ENCODE measurements at regions of chr1 and their contacts with region 1.

Region 1: DNA sequence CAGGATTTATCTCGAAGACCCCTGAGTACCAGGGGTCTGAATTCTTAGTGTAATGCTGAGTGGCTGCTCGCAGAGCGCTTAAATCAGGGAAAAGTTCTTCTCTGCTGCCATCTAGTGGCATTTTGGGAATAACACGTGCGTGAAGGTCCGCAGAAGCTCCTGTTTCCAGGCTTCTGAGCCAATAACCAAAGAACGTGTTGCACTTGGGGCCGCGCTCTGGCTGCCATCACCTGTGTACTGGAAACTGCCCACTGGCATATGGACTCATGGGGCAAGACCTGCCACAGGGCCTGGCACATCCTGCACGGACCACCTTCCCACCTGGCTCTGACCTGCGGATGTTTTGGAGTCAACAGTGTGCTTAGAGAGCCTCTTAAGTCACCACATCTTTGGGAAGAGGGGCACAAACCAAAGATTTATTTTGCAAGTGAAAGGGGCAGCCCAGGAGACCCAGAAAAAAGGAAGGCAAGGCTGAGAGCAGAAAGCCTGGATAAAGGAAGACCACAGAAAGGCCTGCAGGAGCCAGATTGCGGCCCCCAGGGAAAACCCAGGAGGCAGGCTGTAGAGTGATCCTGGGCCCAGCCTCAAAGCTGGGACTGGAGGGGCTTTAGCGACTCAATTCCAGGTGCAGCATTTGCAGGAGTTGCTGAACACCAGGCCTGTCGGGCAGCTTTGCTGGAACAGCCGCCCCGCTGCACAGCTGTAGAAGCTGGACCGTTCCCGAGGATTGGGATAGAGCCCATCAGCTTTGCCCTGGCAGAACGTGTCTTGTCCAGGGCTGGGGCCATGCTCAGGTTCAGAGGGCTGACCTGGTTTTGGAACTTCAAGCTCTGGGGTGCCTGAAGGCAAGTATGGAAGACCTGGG is 13.0 kb downstream of the CHIT1 start:
- DNase-seq: no peak
- H3K4me3 ChIP-seq: no peak overlapping the region
- H3K27me3 ChIP-seq: peaks cover 8% of the 10 kb centered on the region; the same call in 1 of the 2 replicates
- CTCF ChIP-seq: peak; percentile 64

Region 2: DNA sequence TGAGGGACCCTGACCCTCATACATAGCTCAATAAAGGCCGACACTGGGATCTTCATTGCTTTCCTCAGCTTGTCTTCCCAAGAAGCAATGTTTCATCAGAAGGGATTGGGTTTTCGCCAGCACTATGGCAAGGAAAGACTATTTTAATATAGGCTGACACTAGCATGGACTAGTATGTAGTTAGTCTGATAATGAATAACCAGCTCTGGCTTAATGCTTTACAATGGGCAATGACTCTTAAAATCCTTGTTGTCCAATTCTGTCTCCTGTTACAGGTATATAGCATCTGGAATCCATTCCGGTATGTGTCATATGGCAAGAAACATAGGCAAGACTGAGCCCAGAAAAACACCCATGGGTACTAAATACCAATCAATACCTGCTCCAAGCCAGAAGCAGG is 491.0 kb before region 1 on chr1:
- CTCF ChIA-PET with region 1: no interaction called
- POLR2A ChIA-PET with region 1: no interaction called
- DNase-seq: no peak
- H3K4me3 ChIP-seq: no peak overlapping the region
- H3K27me3 ChIP-seq: no peaks in the 10 kb centered on the region
- CTCF ChIP-seq: no peak

Region 3: DNA sequence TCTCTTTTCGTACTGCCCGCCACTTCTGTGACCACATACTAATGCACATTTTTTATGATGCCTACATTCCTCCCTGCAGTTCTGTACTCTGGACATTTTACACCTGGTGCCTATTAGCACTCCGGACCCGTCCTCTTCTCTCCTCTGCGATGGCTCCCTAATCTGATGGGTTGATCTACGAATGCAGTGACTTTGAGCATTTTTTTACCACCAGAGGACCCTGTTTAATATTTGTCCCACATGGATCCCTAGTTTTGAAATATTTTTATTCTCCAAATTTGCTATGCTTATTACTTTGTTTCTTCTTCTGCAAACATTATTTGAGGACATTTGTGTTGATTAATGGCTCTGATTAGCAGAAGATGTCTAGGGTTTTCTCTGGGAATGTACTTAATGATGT is 185.0 kb before region 1 on chr1:
- CTCF ChIA-PET with region 1: interaction called, 34 read pairs
- POLR2A ChIA-PET with region 1: no interaction called
- DNase-seq: no peak
- H3K4me3 ChIP-seq: no peak overlapping the region
- H3K27me3 ChIP-seq: peaks cover 1% of the 10 kb centered on the region
- CTCF ChIP-seq: peak; percentile 51

Region 4: DNA sequence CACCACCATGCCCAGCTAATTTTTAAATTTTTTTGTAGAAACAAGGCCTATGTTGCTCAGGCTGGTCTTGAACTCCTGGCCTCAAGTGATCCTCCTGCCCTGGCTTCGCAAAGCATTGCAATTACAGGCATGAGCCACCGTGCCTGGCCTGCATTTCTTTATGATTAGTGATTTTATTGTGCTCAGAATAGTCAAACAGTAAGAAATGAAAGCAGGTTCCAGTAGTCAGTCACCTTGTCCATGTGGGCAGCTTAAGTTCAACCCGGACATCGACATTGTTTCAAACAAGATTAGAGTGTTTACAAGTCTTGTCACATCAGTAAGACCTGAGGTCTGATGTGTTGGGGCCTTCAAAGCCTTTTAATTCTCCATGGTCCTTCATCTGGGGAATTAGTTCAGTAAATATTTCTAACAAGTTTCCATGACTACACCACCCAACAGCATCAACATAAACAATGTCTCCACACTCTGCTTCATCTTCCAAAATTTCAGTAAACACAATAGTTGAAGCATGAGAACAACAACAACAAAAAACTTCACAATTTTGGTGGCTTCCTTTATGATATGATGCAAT is 104.1 kb before region 1 on chr1:
- CTCF ChIA-PET with region 1: interaction called, 282 read pairs
- POLR2A ChIA-PET with region 1: no interaction called
- DNase-seq: no peak
- H3K4me3 ChIP-seq: no peak overlapping the region
- H3K27me3 ChIP-seq: peaks cover 32% of the 10 kb centered on the region
- CTCF ChIP-seq: no peak

Region 5: DNA sequence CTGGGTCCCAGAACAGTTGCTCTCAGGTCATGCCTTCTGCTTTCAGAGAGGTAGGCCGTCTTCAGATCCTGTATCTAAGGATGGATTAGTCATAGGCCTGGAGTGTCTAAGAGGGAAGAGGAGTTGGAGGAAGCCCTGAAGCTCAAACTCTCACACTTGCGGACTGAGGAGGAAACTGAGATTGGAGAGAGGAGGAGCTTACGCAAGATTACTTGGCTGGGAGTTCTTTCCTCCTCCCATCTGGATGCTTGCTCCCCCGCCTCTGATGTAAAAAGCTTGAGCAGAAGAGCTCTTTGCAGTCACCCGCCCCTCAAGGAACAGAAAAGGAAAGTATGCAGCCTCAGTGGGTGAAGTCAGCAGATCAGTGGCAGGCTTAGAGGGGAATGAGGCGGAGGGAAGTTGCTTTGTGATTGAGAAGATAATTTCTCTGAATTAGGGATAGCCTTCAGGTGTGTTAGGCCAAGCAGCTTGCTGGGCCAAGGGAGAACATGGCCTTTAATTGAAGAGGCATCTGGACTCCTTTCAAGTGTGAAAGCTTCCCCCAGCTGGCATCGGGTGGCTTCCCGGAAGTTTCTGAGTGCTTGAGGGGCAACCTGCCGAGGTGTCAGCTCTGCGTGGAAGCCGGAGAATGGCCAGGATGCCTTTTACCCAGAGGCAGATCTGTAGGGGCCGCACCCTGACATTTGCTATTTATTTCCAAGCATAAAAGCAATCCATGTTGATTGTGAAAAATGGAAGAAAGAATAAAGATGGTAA is 82.4 kb before region 1 on chr1:
- CTCF ChIA-PET with region 1: interaction called, 67 read pairs
- POLR2A ChIA-PET with region 1: no interaction called
- DNase-seq: no peak
- H3K4me3 ChIP-seq: no peak overlapping the region
- H3K27me3 ChIP-seq: no peaks in the 10 kb centered on the region
- CTCF ChIP-seq: no peak

Region 6: DNA sequence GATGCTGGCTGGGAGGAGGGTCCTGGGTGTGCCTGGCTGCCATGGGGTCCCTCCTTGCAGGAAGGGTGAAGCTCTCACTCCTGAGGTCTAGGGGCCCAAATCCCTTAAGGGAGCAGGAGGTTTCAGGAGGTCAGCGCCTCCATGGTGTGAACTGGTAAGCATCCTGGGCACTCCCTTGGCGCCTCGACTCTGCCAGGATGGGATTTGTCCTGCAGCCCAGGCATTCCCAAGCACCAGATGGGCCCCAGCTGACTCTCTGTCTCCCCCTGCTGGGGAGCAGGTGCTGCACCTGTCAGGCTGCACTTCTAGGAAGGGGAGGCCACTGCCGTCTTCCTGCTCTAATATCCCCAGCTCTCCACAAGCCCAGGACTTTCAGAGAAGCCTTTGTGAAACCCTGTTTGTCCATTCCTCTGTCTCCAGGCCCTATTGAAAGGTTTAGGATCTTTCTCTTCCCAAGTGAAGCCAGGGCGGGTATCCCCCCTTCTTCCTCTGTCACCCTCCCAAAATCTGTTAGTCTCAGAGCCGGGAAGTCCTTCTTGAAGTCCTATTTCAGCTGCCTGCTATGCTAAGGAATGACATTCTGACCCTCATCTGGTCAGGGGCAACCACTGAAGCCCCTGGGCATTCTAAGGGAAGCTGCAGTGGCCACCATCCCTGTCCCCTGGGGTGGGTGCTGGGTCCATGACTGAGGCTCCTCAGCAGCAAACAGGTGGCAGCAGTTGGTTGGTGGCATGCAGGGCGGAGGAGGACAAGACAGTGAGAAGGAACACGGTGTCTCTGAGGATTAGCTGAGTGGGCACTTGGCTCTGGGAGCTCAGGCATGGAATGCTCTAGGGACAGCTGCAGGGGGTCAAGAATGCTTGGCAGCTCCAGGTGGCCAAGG is 44.1 kb before region 1 on chr1:
- CTCF ChIA-PET with region 1: interaction called, 146 read pairs
- POLR2A ChIA-PET with region 1: no interaction called
- DNase-seq: no peak
- H3K4me3 ChIP-seq: no peak overlapping the region
- H3K27me3 ChIP-seq: no peaks in the 10 kb centered on the region
- CTCF ChIP-seq: peak; percentile 98

Region 7: GRCh38 chr1:203229471-203230135 is 13.1 kb after region 1 on chr1 and contains the start of gene CHIT1:
- CTCF ChIA-PET with region 1: interaction called, 40 read pairs
- POLR2A ChIA-PET with region 1: no interaction called
- DNase-seq: no peak
- H3K4me3 ChIP-seq: no peak within 1 kb of the TSS
- H3K27me3 ChIP-seq: peaks cover 17% of the 10 kb centered on the region
- CTCF ChIP-seq: no peak
- polyA plus RNA-seq, gene CHIT1: not detected in 2 replicates

Measured in BJ (cell line).